OCI-LY7 (cell line): ENCODE measurements at regions of chr16 and their contacts with region 1.

Region 1: GRCh38 chr16:3880623-3881498 is at the start of gene CREBBP:
- DNase-seq: peak; percentile 93
- H3K4me3 ChIP-seq: peak within 1 kb of the TSS; percentile 83
- H3K27ac ChIP-seq: peak within 1 kb of the TSS; percentile 11
- H3K4me1 ChIP-seq: peaks cover 30% of the 10 kb centered on the region
- CTCF ChIP-seq: no peak
- total RNA-seq, gene CREBBP: 33.0 and 36.0 TPM in 2 replicates

Region 2: DNA sequence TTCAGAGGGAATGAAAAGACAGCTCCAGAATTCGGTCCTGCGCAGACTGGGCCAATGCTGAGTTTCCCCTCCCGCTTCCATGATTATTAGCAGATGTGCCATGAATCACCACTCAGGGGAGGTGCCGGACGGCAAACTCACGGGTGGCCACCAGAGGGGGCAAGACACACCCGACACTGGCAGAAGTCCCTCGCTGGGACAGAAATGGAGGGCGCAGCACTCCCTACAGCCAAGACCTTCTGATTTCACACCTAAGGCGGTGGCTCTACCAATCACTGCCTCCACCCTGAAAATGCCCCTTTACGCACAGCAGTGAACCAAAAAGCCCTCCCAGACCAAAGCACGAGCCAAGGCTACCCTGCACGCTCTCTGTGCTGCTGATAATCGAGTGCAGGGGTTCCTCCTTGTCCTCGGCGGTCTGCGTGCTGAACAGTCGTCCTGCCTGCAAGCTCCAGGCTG is 190.4 kb before region 1 on chr16:
- CTCF ChIA-PET with region 1: no interaction called
- POLR2A ChIA-PET with region 1: no interaction called
- intact Hi-C with region 1: loop called (anchors 1 kb)
- DNase-seq: peak; percentile 82
- H3K4me3 ChIP-seq: no peak overlapping the region
- H3K27ac ChIP-seq: no peak overlapping the region
- H3K4me1 ChIP-seq: no peaks in the 10 kb centered on the region
- CTCF ChIP-seq: peak; percentile 96